ENCODE measurements at regions of chr11 and their contacts with region 1.

Region 1: GRCh38 chr11:20443596-20443995 is 56.1 kb downstream of the PRMT3 start:
- DNase-seq: no peak
- H3K4me3 ChIP-seq: no peak overlapping the region
- H3K27ac ChIP-seq: no peak overlapping the region
- H3K27me3 ChIP-seq: no peaks in the 10 kb centered on the region
- CTCF ChIP-seq: peak; percentile 51

Region 2: DNA sequence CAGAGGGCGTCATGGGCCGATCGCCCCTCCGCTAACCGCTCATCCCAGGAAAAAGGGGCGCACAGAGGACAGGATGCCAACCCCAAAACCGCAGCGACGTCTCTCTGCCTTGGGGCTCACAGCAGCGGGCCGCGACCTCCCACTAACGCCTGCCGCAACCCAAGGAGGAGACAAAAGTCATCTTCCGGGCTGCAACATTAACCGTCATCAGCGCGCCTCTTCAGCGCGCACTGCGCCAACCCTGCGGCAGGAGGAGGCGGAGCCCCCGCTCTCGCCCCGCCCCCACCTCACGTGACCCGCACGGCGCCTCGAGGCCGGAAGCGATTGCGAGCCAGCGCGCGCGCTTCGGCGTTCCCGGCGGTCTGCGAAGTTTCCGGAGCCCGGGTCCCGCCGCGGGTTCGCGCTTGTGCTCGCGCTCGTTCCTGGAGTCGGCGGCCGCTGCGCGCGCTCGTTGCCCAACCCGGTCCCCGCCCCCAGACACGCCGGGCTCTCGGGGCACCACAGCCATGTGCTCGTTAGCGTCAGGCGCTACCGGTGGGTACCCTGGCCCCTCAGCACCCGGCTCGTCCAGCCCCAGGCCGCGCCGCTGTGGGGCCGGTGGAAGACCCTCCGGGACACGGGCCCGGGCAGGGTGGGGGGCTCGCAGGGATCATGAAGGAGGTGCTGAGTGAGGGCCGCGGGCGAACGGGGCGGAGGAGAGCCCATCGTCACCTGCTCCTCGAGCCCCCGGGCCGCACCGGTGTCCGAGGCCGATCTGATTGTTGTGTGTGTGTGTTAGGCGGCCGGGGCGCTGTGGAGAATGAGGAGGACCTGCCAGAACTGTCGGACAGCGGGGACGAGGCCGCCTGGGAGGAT is 56.1 kb before region 1 on chr11 and contains the start of gene PRMT3:
- CTCF ChIA-PET with region 1: interaction called, 10 read pairs
- POLR2A ChIA-PET with region 1: no interaction called
- DNase-seq: peak; percentile 88
- H3K4me3 ChIP-seq: peak within 1 kb of the TSS; percentile 95
- H3K27ac ChIP-seq: peak within 1 kb of the TSS; percentile 94
- H3K27me3 ChIP-seq: no peaks in the 10 kb centered on the region
- CTCF ChIP-seq: peak; percentile 99
- polyA plus RNA-seq, gene PRMT3: 11.6 and 14.8 TPM in 2 replicates

Region 3: GRCh38 chr11:20415432-20415831 is 28.2 kb before region 1 on chr11:
- CTCF ChIA-PET with region 1: interaction called, 11 read pairs
- POLR2A ChIA-PET with region 1: no interaction called
- DNase-seq: no peak
- H3K4me3 ChIP-seq: no peak overlapping the region
- H3K27ac ChIP-seq: no peak overlapping the region
- H3K27me3 ChIP-seq: no peaks in the 10 kb centered on the region
- CTCF ChIP-seq: no peak

Region 4: DNA sequence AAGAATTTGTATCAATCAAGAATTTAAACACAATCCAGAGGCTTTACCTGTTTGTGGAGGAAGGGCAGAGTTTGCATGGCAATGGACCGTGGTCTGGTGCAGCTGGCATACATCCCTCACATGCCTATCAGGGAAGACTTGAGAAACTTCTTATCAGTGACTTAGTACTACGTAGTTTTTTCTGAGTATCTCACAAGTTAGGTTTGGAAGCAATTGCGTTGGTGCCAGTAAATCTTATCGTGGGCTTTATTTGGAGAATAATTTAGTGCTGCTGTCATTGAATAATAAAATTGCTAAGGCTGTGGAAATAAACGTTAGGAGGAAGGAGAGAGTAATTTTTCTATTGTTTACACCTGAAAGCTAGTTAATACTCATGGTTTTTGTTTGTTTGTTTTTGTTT is 16.3 kb after region 1 on chr11:
- CTCF ChIA-PET with region 1: interaction called, 15 read pairs
- POLR2A ChIA-PET with region 1: no interaction called
- DNase-seq: no peak
- H3K4me3 ChIP-seq: no peak overlapping the region
- H3K27ac ChIP-seq: no peak overlapping the region
- H3K27me3 ChIP-seq: no peaks in the 10 kb centered on the region
- CTCF ChIP-seq: no peak

Measured in AG04450 (cell line).